Breast epithelium (tissue), 4 donors: ENCODE measurements at regions of chr4 and their contacts with region 1.

Region 1: DNA sequence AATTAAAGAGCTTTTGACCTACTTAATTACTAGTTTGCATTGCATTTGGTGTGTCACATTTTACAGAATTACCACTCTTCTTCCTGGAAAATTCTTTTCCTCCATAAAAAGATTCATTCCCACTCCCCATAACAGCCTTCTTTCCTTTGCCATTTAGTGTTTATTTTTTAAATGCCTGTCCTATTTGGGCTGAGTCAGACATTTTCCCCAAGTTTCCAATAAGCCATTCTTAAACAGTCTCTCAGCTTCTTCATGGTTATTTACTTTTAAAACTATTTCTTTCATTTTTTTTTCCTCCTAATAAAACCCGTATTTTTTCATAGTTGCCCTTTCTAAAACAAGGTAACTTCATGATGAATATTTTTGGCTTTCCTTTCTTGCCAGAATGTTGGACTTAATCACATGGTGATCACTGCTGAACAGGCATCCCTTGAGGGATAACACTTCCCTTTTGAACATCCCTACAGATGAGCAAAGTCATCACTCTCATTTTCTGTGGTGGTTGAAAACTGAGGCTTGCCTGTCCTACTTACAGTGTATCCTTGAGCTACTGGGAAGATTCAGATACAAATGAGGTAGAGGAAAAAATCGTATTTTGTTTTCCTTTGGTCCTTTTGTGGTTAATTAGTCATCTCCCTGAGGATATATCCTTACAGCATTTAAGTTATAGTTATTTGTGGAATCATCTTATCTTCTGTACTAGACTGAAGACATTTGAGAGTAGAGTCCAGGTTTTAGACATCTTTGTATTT is 520.5 kb upstream of the NR3C2 start:
- DNase-seq: no peak
- H3K4me3 ChIP-seq: no peak overlapping the region
- H3K27ac ChIP-seq: no peak overlapping the region
- H3K4me1 ChIP-seq: no peaks in the 10 kb centered on the region
- H3K27me3 ChIP-seq: no peaks in the 10 kb centered on the region
- CTCF ChIP-seq: no peak
- POLR2A ChIP-seq: no peak

Region 2: GRCh38 chr4:148822572-148823418 is 139.9 kb before region 1 on chr4:
- intact Hi-C with region 1: no loop called
- DNase-seq: no peak
- H3K4me3 ChIP-seq: no peak overlapping the region
- H3K27ac ChIP-seq: no peak overlapping the region
- H3K4me1 ChIP-seq: no peaks in the 10 kb centered on the region
- H3K27me3 ChIP-seq: no peaks in the 10 kb centered on the region
- CTCF ChIP-seq: no peak
- POLR2A ChIP-seq: no peak

Region 3: GRCh38 chr4:148951346-148951745 is 11.4 kb before region 1 on chr4:
- intact Hi-C with region 1: loop called (anchors 1 kb)
- DNase-seq: no peak
- H3K4me3 ChIP-seq: no peak overlapping the region
- H3K27ac ChIP-seq: no peak overlapping the region
- H3K4me1 ChIP-seq: no peaks in the 10 kb centered on the region
- H3K27me3 ChIP-seq: no peaks in the 10 kb centered on the region
- CTCF ChIP-seq: no peak
- POLR2A ChIP-seq: no peak

Region 4: GRCh38 chr4:148998719-148999118 is 36.0 kb after region 1 on chr4:
- intact Hi-C with region 1: no loop called
- DNase-seq: no peak
- H3K4me3 ChIP-seq: no peak overlapping the region
- H3K27ac ChIP-seq: no peak overlapping the region
- H3K4me1 ChIP-seq: no peaks in the 10 kb centered on the region
- H3K27me3 ChIP-seq: no peaks in the 10 kb centered on the region
- CTCF ChIP-seq: no peak
- POLR2A ChIP-seq: no peak